ENCODE measurements at regions of chr14 and their contacts with region 1.

Region 1: DNA sequence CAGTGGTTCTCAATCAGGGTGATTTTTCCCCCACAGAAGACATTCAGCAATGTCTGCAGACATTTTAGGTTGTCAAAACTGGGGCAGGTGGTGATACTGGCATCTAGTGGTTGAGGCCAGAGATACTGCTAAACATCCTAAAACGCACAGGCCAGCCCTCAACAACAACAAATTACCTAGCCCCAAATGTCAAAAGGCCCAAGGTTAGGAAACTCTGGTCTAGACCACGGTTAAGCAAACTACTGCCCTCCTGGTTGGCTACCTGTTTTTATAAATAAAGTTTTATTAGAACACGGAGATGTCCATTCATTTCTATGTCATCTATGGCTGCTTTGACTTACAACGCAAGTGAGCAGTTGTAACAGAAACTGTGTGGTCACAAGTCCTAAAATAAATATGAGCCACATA is 186.7 kb downstream of the EFCAB11 start:
- DNase-seq: peak; percentile 60
- H3K4me3 Mint-ChIP-seq: no peak overlapping the region
- H3K27ac Mint-ChIP-seq: peak overlapping the region; percentile 82
- H3K4me1 Mint-ChIP-seq: peaks cover 24% of the 10 kb centered on the region
- H3K27me3 Mint-ChIP-seq: peaks cover 6% of the 10 kb centered on the region

Region 2: DNA sequence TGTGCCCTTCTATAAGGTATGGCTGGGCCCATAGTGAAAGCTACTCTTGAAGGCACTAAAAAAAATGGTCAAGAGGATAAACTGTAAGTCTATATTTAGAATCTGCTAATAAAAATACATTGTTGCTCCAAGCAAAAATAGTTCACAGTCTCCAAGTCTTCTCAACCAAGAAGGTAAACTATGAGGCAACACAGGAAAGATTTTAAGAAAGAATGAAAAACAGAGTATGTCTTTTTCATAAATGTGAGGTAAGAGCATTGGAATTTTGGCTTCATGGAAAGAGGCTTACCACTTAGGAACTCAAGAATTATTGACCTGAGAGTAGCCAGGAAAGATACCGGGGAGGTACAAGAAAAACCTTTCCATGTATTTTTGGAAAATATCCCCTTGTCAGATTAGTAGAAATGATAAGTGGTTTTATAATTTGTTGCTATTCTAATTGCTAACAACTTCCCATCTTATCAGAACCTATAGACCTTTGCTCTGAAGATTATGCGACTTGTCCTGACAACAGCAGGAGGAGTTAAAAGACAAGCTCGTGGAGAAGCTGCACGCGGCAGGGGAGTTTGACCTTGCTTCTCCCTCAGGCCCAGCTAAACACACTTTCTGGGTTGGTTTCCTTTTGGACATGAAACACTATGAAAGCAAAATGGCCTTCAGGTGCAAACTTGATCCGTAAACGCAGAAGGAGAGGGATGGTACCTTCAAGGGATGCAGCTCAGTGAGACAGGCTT is 588.9 kb before region 1 on chr14:
- intact Hi-C with region 1: loop called (anchors 5 kb)
- DNase-seq: no peak
- H3K4me3 Mint-ChIP-seq: no peak overlapping the region
- H3K27ac Mint-ChIP-seq: no peak overlapping the region
- H3K4me1 Mint-ChIP-seq: peaks cover 4% of the 10 kb centered on the region
- H3K27me3 Mint-ChIP-seq: no peaks in the 10 kb centered on the region

Region 3: GRCh38 chr14:89625244-89625713 is 142.6 kb before region 1 on chr14:
- intact Hi-C with region 1: loop called (anchors 2 kb)
- DNase-seq: no peak
- H3K4me3 Mint-ChIP-seq: no peak overlapping the region
- H3K27ac Mint-ChIP-seq: peak overlapping the region; percentile 93
- H3K4me1 Mint-ChIP-seq: peaks cover 65% of the 10 kb centered on the region
- H3K27me3 Mint-ChIP-seq: no peaks in the 10 kb centered on the region